Activated naive CD4-positive, alpha-beta T cell treated with anti-CD3 and anti-CD28 coated beads for 36 hours (primary cell): ENCODE measurements at regions of chr1 and their contacts with region 1.

Region 1: GRCh38 chr1:180482425-180483275 is 19.7 kb downstream of the ACBD6 start:
- DNase-seq: no peak
- H3K4me3 Mint-ChIP-seq: no peak overlapping the region
- H3K27ac Mint-ChIP-seq: no peak overlapping the region
- H3K4me1 Mint-ChIP-seq: peaks cover 11% of the 10 kb centered on the region
- H3K27me3 Mint-ChIP-seq: no peaks in the 10 kb centered on the region

Region 2: DNA sequence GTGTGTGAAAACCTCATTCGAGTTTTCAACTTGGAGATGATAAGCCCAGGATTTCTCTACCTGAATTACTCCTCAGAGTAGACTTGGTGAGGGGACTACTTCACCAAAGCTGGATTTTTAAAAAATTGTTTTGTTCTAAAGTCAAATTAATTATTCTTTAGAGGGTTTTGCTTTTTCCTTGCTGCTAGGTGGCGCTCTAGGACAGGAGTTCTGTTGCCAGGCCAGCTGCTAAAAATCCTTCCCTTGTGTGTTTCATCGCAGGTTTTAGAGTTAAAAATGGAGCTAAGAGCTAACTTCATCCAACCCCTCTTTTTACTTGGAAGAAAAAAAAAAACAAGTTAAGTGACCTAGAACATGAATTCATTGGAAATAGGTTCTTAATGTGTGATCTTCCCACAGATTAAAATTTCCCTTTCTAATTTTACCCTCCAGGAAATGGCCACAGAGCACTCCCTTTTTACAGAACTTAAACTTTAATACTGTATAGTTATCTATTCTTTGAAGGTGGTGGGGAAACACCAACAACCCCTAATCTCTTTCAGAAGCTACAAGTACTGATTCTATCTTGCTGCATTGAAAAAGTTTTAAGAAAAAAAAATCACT is 776.2 kb before region 1 on chr1:
- CTCF ChIA-PET with region 1: no interaction called
- intact Hi-C with region 1: loop called (anchors 1 kb)
- DNase-seq: peak; percentile 83
- H3K4me3 Mint-ChIP-seq: no peak overlapping the region
- H3K27ac Mint-ChIP-seq: no peak overlapping the region
- H3K4me1 Mint-ChIP-seq: peaks cover 23% of the 10 kb centered on the region
- H3K27me3 Mint-ChIP-seq: no peaks in the 10 kb centered on the region

Region 3: DNA sequence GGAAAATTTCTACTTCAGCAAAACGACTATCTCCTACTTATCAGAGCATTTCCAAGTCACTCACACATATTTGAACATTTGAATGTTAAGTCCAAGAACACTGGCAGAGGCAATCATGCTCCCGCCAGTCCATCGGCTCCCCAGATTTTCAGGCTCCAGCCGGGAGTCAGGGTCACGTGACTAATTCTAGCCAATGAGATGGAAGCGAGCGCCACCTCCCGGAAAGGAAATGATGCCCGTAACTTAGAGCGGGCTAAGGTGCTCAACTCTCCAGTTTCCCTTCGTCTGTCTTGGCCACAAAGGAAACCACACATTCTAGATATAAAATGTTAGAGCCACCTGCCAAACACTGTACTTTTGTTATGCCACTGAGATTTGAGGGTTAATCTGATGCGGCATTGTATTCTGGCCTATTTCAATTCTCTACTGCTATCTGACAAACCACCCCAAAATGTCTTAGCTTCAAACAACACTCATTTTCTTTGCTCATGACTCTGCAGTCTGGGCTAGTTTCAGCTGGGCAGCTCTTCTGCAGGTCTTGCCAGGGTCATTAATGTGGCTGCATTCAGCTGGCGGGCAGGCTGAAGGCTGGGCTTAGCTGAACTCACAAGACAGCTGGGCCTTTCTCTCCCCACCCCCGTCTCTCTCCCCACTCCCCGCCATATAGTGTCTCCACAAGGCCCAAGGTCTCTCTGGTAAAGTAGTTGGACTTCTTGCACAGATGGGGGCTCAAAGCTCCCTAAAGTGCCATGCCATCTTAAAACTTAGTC is 269.1 kb before region 1 on chr1:
- CTCF ChIA-PET with region 1: interaction called, 10 read pairs
- intact Hi-C with region 1: no loop called
- DNase-seq: peak; percentile 80
- H3K4me3 Mint-ChIP-seq: peak overlapping the region; percentile 56
- H3K27ac Mint-ChIP-seq: no peak overlapping the region
- H3K4me1 Mint-ChIP-seq: peaks cover 20% of the 10 kb centered on the region
- H3K27me3 Mint-ChIP-seq: peaks cover 4% of the 10 kb centered on the region

Region 4: GRCh38 chr1:180365039-180365438 is 117.6 kb before region 1 on chr1:
- CTCF ChIA-PET with region 1: interaction called, 4 read pairs
- intact Hi-C with region 1: loop called (anchors 1 kb)
- DNase-seq: no peak
- H3K4me3 Mint-ChIP-seq: no peak overlapping the region
- H3K27ac Mint-ChIP-seq: no peak overlapping the region
- H3K4me1 Mint-ChIP-seq: no peaks in the 10 kb centered on the region
- H3K27me3 Mint-ChIP-seq: no peaks in the 10 kb centered on the region

Region 5: DNA sequence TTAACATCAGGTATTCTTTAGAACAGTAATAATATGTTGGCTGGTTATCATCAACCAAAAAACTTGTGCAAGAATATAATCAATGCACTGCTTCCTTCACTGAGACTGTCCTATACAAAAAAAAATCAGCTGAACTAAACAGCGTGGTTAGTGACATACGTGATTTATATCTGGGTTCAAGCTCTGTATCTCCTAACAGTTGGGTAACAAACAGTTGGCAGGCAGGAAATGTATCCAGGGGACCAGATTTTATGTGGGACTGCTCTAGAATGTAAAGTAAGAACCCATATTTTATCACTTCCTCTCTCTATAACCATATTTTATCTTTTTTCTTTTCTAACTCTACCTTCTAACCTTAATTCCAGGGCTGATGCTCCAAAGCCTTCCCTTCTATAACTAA is 11.7 kb after region 1 on chr1:
- CTCF ChIA-PET with region 1: interaction called, 10 read pairs
- intact Hi-C with region 1: no loop called
- DNase-seq: no peak
- H3K4me3 Mint-ChIP-seq: no peak overlapping the region
- H3K27ac Mint-ChIP-seq: no peak overlapping the region
- H3K4me1 Mint-ChIP-seq: peaks cover 14% of the 10 kb centered on the region
- H3K27me3 Mint-ChIP-seq: no peaks in the 10 kb centered on the region